ENCODE measurements at regions of chr1 and their contacts with region 1.

Region 1: DNA sequence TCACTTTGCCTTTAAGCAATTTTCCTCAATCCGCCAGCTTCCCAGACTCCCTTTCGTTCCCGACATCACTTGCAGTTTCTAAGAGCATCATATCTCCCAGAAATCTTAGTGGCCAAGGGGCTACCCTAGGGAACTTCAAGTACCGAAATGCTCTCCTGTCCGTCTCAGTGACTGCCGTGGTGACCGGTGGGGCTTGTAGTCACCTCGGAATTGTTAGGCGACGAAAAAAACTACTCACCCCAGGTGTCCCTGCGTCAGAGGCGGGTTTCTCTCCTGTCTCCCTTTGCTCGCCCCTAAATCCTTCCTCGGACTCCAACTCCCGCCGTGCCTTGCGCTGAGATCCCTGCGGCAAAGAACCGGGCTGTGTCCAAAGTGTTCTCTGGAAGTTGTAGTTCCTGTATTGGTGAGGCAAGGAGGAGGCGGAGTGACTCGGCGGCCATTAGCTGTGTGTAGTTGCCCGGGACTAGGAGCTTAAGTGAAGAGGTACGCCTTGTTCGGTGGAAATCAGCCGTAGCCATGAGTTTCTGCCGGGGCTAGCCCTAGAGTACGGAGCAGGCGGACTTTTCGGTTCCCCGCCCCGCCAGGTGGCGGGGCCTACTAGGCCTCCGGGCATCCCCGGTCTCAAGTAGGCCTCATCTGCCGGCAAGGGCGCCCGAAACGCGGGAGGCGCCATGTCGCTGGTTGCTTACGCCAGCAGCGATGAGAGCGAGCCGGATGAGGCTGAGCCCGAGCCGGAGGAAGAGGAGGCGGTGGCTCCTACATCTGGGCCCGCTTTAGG is at the start of gene PRCC:
- DNase-seq: peak; percentile 99
- H3K4me3 ChIP-seq: peak within 1 kb of the TSS; percentile 89
- H3K27ac ChIP-seq: peak within 1 kb of the TSS; percentile 64
- H3K4me1 ChIP-seq: peaks cover 24% of the 10 kb centered on the region
- CTCF ChIP-seq: no peak
- total RNA-seq, gene PRCC: 53.7 and 54.0 TPM in 2 replicates

Region 2: GRCh38 chr1:156740679-156741612 is 26.3 kb before region 1 on chr1 and contains the start of gene MRPL24:
- CTCF ChIA-PET with region 1: no interaction called
- POLR2A ChIA-PET with region 1: interaction called, 16 read pairs
- intact Hi-C with region 1: loop called (anchors 1 kb)
- DNase-seq: peak; percentile 99
- H3K4me3 ChIP-seq: peak within 1 kb of the TSS; percentile 74
- H3K27ac ChIP-seq: peak within 1 kb of the TSS; percentile 70
- H3K4me1 ChIP-seq: peaks cover 26% of the 10 kb centered on the region
- CTCF ChIP-seq: no peak
- total RNA-seq, gene MRPL24: 55.3 and 69.0 TPM in 2 replicates

Region 3: GRCh38 chr1:156751758-156752757 is 15.2 kb before region 1 on chr1:
- CTCF ChIA-PET with region 1: no interaction called
- POLR2A ChIA-PET with region 1: interaction called, 10 read pairs
- intact Hi-C with region 1: loop called (anchors 1 kb)
- DNase-seq: peak; percentile 97
- H3K4me3 ChIP-seq: peak overlapping the region; percentile 85
- H3K27ac ChIP-seq: peak overlapping the region; percentile 81
- H3K4me1 ChIP-seq: peaks cover 40% of the 10 kb centered on the region
- CTCF ChIP-seq: no peak

Measured in OCI-LY7 (cell line).